ENCODE measurements at regions of chr10 and their contacts with region 1.

Region 1: DNA sequence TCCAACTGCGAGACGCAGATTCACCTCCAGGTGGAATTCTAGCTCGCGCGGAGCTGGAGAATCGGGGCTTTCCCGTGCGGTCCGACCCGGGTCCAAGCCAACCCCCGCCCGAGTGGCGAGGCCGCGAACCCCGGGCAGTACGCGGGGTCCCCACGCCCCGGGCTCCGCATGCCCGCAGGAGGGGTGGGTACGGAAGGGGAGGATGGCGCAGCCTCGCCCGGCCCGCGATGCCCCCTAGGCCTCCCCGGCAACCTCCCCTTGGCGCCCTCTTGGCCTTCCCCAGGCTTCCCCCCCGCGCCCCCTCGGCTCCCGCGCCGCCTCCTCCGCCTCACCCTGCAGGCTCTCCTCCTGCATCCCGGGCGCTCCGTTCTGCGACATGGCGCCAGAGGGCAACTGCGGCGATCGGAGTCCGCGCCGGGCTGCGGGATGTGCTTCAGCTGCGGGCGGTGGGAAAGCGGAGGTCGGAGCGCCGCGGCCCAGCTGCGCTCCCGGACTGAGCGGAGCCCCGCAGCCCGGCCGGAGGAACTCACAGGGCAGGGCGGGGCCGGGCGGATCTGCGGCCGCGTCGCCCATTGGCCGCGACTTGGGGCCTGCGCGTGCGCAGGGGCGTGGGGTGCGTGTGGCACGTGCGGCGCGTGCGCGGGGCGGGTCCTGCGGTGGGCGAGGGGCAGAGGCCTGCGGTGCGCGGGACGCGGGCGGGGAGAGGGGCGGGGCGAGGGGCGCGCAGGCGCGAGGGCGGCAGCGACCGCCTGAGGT is at the start of gene BNIP3:
- DNase-seq: peak; percentile 78
- H3K4me3 ChIP-seq: peak within 1 kb of the TSS; percentile 88
- CTCF ChIP-seq: peak; percentile 17

Region 2: GRCh38 chr10:131786756-131787605 is 194.6 kb before region 1 on chr10:
- in situ Hi-C with region 1: no loop called
- DNase-seq: peak; percentile 3
- H3K4me3 ChIP-seq: no peak overlapping the region
- CTCF ChIP-seq: peak; percentile 54

Region 3: DNA sequence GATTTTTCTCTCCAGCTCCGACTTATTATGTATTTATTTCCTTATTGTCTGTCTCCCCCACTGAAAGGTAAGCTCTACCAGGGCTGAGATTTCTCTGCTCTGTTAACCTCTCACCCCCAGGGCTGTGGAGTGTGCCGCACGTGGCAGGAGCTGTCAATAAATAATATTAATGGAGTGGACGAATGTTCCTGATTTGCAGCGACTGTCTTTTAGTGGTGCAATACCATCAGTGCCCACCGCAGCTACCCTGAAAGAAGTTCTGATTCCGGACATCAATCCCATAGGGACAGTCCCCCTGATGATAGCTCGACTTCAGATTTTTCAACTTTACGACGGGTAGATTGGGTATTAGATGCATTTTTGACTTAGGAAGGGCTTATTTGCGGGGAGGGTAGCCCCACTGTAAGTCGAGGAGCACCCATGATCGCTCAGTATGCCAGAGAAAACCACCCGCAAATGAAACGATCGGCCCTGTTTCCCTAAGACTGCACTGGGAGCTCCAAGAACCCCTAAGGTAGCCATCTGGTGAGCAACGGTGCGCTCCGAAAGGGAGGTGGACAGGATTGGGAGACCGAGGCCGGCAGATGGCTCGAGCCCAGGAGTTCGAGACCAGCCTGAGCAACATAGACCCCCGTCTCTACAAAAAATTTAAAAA is 81.8 kb before region 1 on chr10:
- in situ Hi-C with region 1: loop called (anchors 5 kb)
- DNase-seq: no peak
- H3K4me3 ChIP-seq: peak overlapping the region; percentile 65
- CTCF ChIP-seq: no peak

Measured in astrocyte of the cerebellum (primary cell).